A549 (cell line): ENCODE measurements at regions of chr2 and their contacts with region 1.

Region 1: GRCh38 chr2:69306822-69307578 is 80.0 kb downstream of the GFPT1 start:
- DNase-seq: peak; percentile 88 to 90
- ATAC-seq: peak; percentile 81 to 92
- H3K4me3 ChIP-seq: peak overlapping the region; percentile 86
- H3K27ac ChIP-seq: peak overlapping the region; percentile 94 to 99
- H3K4me1 ChIP-seq: peaks cover 37% of the 10 kb centered on the region
- CTCF ChIP-seq: peak; percentile 92
- EP300 ChIP-seq: no peak
- POLR2A ChIP-seq: peak; percentile 19; the same call in 1 of the 2 replicates
- RAD21 ChIP-seq: peak; percentile 97 to 99

Region 2: GRCh38 chr2:68789603-68790002 is 517.4 kb before region 1 on chr2:
- CTCF ChIA-PET with region 1: no interaction called
- POLR2A ChIA-PET with region 1: no interaction called
- DNase-seq: no peak
- ATAC-seq: no peak
- H3K4me3 ChIP-seq: no peak overlapping the region
- H3K27ac ChIP-seq: no peak overlapping the region
- H3K4me1 ChIP-seq: no peaks in the 10 kb centered on the region
- CTCF ChIP-seq: no peak
- EP300 ChIP-seq: no peak
- POLR2A ChIP-seq: no peak
- RAD21 ChIP-seq: no peak

Region 3: GRCh38 chr2:68943581-68944568 is 363.1 kb before region 1 on chr2:
- CTCF ChIA-PET with region 1: interaction called, 46 read pairs
- POLR2A ChIA-PET with region 1: no interaction called
- DNase-seq: peak; percentile 66 to 79
- ATAC-seq: peak; percentile 95 to 96
- H3K4me3 ChIP-seq: no peak overlapping the region
- H3K27ac ChIP-seq: peak overlapping the region; percentile 68 to 87
- H3K4me1 ChIP-seq: peaks cover 5% of the 10 kb centered on the region; the same call in 2 of the 3 replicates
- CTCF ChIP-seq: peak; percentile 91
- EP300 ChIP-seq: no peak; a peak in 1 of 5 replicates
- POLR2A ChIP-seq: no peak
- RAD21 ChIP-seq: peak; percentile 91 to 93

Region 4: GRCh38 chr2:69082430-69082997 is 224.5 kb before region 1 on chr2:
- CTCF ChIA-PET with region 1: interaction called, 10 read pairs
- POLR2A ChIA-PET with region 1: interaction called, 4 read pairs
- DNase-seq: peak; percentile 80 to 97
- ATAC-seq: peak; percentile 87 to 90
- H3K4me3 ChIP-seq: no peak overlapping the region
- H3K27ac ChIP-seq: peak overlapping the region; percentile 71 to 86
- H3K4me1 ChIP-seq: peaks cover 57% of the 10 kb centered on the region
- CTCF ChIP-seq: no peak
- EP300 ChIP-seq: peak; percentile 85 to 86; a peak in 3 of 5 replicates
- POLR2A ChIP-seq: no peak
- RAD21 ChIP-seq: peak; percentile 36 to 57

Region 5: DNA sequence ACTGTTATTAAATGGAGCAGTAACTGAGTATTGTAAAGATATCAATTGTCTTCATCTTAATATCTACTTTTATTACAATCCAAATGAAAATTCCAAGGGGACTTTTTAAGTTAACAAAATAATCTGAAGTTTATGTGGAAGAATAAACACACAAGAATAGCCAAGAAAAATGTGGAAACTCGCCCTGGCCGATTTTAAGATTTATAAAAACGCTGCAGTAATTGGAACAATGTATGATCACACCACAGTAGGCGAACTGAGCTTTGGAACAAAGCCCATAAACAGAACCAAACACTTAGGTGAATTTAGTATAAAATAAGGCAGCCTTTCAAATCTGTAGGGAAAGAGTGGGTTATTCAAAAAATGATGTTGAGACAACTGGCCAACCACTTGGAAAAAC is 197.7 kb before region 1 on chr2:
- CTCF ChIA-PET with region 1: no interaction called
- POLR2A ChIA-PET with region 1: no interaction called
- DNase-seq: no peak
- ATAC-seq: no peak
- H3K4me3 ChIP-seq: no peak overlapping the region
- H3K27ac ChIP-seq: no peak overlapping the region
- H3K4me1 ChIP-seq: peaks cover 13% of the 10 kb centered on the region
- CTCF ChIP-seq: no peak
- EP300 ChIP-seq: no peak
- POLR2A ChIP-seq: no peak
- RAD21 ChIP-seq: no peak

Region 6: GRCh38 chr2:69181806-69182427 is 125.1 kb before region 1 on chr2:
- CTCF ChIA-PET with region 1: interaction called, 17 read pairs
- POLR2A ChIA-PET with region 1: no interaction called
- DNase-seq: no peak
- ATAC-seq: no peak
- H3K4me3 ChIP-seq: no peak overlapping the region
- H3K27ac ChIP-seq: no peak overlapping the region
- H3K4me1 ChIP-seq: peaks cover 15% of the 10 kb centered on the region
- CTCF ChIP-seq: no peak
- EP300 ChIP-seq: no peak
- POLR2A ChIP-seq: no peak
- RAD21 ChIP-seq: no peak

Region 7: DNA sequence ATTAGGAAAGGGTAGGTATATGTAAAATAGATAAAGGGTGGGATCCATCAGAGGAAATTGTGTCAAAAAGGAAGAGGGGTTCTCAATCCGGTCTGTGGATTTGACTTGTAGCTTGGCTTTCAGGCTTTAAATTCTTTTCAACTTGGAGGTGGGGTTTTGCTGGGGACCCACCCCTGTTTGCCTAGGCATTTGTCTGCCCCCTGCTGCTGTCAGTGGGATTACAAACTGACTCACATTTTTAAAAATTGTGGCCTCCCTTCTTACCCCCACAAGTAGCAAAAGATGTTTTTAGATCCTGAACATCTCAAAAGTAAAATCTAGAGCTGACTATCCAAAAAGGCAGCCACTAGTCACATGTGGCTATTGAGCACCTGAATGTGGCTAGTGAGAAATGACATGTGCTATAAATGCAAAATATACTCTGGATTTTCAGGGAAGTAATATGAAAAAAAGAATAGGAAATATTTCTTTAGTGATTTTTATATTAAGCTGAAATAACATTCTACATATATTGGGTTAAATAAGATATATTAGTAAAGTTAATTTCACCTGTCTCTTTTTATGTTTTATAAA is 98.9 kb before region 1 on chr2:
- CTCF ChIA-PET with region 1: interaction called, 15 read pairs
- POLR2A ChIA-PET with region 1: no interaction called
- DNase-seq: peak in 1 of 2 experiments; percentile 20
- ATAC-seq: peak in 1 of 2 experiments; percentile 35; a peak in 1 of 6 replicates
- H3K4me3 ChIP-seq: no peak overlapping the region
- H3K27ac ChIP-seq: no peak overlapping the region
- H3K4me1 ChIP-seq: no peaks in the 10 kb centered on the region
- CTCF ChIP-seq: 0 out of 3 replicates have a peak, but pooled peaks have one; percentile 16
- EP300 ChIP-seq: no peak
- POLR2A ChIP-seq: no peak
- RAD21 ChIP-seq: peak in 1 of 2 experiments; percentile 28; a peak in 2 of 5 replicates

Region 8: DNA sequence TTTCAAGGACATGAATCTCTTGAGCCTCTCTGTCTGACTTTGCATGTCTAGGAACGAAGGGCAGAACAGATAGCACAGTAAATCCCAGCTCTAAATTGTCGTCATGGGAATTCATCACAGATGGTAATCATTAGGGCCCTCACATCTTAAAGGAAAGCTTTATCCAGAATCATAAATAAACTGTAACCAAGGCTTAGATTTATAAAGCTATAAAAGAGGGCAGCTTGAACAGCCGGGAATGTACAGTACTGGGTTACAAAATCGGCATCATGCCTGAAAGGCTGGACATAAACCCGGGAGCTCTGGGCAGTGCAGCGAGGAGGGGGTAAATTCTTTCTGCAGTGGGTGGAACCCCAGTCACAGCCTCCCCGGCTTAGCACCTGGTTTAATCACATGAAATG is 64.3 kb before region 1 on chr2:
- CTCF ChIA-PET with region 1: interaction called, 24 read pairs
- POLR2A ChIA-PET with region 1: no interaction called
- DNase-seq: no peak
- ATAC-seq: no peak
- H3K4me3 ChIP-seq: no peak overlapping the region
- H3K27ac ChIP-seq: peak overlapping the region in 1 of 2 experiments; percentile 49; a peak in 1 of 6 replicates
- H3K4me1 ChIP-seq: peaks cover 8% of the 10 kb centered on the region
- CTCF ChIP-seq: no peak
- EP300 ChIP-seq: no peak
- POLR2A ChIP-seq: no peak
- RAD21 ChIP-seq: no peak

Region 9: DNA sequence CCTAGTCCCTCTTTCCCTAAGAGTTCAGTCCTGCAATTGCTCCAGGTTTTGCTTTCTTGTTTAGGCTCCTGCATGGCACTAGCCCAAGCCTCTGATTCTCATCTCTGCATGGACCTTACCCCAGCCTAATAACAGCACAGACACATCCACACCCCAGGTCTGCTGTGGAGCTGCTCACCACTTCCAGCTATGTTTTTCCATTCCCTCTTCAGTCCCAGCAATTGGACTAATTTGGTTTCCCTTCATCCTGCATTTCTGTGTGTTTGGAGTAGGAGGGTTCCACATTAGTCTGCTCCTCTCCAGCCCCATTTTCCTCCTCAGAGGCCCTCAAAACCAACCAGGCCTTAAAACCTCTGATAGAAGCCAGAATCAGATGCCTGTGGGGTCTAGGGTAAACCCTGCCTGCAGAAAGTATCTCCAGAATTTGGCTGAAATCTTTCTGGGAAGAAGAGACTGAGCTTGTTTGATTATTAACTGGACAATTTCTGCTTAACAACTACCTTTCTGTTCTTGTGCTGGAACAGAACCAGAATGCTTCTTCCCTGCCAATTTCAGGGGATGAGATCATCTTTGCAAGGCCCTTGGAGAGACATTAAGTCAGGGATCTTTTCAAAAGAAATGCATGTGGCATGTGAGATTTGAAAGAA is 15.9 kb before region 1 on chr2:
- CTCF ChIA-PET with region 1: interaction called, 43 read pairs
- POLR2A ChIA-PET with region 1: no interaction called
- DNase-seq: peak in 1 of 2 experiments; percentile 27
- ATAC-seq: peak; percentile 33 to 63; a peak in 3 of 6 replicates
- H3K4me3 ChIP-seq: no peak overlapping the region
- H3K27ac ChIP-seq: peak overlapping the region; percentile 73 to 85
- H3K4me1 ChIP-seq: peaks cover 22% of the 10 kb centered on the region
- CTCF ChIP-seq: no peak
- EP300 ChIP-seq: no peak
- POLR2A ChIP-seq: no peak
- RAD21 ChIP-seq: no peak

Region 10: GRCh38 chr2:69356471-69356870 is 49.5 kb after region 1 on chr2:
- CTCF ChIA-PET with region 1: no interaction called
- POLR2A ChIA-PET with region 1: no interaction called
- DNase-seq: no peak
- ATAC-seq: no peak
- H3K4me3 ChIP-seq: no peak overlapping the region
- H3K27ac ChIP-seq: no peak overlapping the region
- H3K4me1 ChIP-seq: peaks cover 9% of the 10 kb centered on the region
- CTCF ChIP-seq: no peak
- EP300 ChIP-seq: no peak
- POLR2A ChIP-seq: no peak
- RAD21 ChIP-seq: no peak

Region 11: GRCh38 chr2:69428981-69429380 is 122.0 kb after region 1 on chr2:
- CTCF ChIA-PET with region 1: no interaction called
- POLR2A ChIA-PET with region 1: no interaction called
- DNase-seq: no peak
- ATAC-seq: no peak
- H3K4me3 ChIP-seq: no peak overlapping the region
- H3K27ac ChIP-seq: no peak overlapping the region
- H3K4me1 ChIP-seq: peaks cover 8% of the 10 kb centered on the region; the same call in 2 of the 3 replicates
- CTCF ChIP-seq: no peak
- EP300 ChIP-seq: no peak
- POLR2A ChIP-seq: no peak
- RAD21 ChIP-seq: no peak